Spleen (tissue), 13 donors: ENCODE measurements at regions of chrX and their contacts with region 1.

Region 1: GRCh38 chrX:65392284-65392683 is 142.3 kb downstream of the LAS1L start:
- DNase-seq: no peak
- H3K4me3 ChIP-seq: no peak overlapping the region
- H3K27ac ChIP-seq: no peak overlapping the region
- H3K4me1 ChIP-seq: no peaks in the 10 kb centered on the region
- H3K27me3 ChIP-seq: no peaks in the 10 kb centered on the region
- CTCF ChIP-seq: no peak
- POLR2A ChIP-seq: no peak

Region 2: GRCh38 chrX:65331371-65331770 is 60.9 kb before region 1 on chrX:
- intact Hi-C with region 1: loop called (anchors 10 kb)
- DNase-seq: no peak
- H3K4me3 ChIP-seq: no peak overlapping the region
- H3K27ac ChIP-seq: no peak overlapping the region
- H3K4me1 ChIP-seq: no peaks in the 10 kb centered on the region
- H3K27me3 ChIP-seq: no peaks in the 10 kb centered on the region
- CTCF ChIP-seq: no peak
- POLR2A ChIP-seq: no peak